ENCODE measurements at regions of chr4 and their contacts with region 1.

Region 1: DNA sequence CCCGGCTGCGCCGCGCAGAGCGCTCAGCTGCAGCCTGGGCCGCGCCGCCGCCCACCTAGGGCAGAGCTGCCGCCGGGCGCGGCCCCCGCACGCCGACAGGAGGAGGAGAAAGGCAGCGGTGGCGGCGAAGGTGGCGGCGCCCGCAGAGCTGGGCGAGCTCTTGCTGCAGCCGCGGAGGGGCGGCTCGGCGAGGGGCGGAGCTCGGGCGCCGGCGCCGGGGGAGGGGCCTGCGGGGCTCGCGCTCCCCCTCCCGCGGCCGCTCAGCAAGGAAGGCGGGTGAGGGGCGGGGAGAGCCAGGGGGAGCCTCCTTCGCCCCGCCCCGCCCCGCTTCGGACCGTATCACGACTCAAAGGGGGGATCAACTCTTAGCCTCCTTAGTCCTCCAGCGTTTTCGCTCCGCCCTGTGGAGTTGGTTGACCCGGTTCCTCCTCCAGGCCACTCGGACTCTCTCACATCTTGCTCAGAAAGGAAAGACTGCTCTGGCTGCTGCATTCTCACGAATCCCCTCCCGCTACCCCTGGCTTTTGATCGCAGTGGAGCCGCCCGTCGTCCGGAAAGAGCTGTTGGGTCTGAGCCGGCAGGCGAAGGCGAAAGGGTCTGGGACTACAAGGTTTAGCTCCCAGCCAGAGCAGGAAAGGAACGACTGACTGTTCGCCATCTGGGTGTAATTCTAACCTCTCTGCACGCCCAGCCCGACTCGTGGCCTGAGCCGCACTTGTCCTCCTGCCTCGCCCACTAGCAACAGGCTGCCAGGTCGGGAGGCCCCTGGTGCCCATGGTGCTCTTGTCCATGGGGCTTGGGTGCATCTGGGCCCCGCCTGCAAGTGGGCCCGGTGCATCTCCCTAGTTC is at the start of gene ATP8A1:
- DNase-seq: peak; percentile 93
- ATAC-seq: peak; percentile 91
- H3K4me3 Mint-ChIP-seq: peak within 1 kb of the TSS; percentile 97
- H3K27ac Mint-ChIP-seq: peak within 1 kb of the TSS; percentile 99
- H3K4me1 Mint-ChIP-seq: peaks cover 41% of the 10 kb centered on the region
- H3K27me3 Mint-ChIP-seq: no peaks in the 10 kb centered on the region
- CTCF ChIP-seq: no peak
- total RNA-seq, gene ATP8A1: 27.9 and 35.6 TPM in 2 replicates

Region 2: DNA sequence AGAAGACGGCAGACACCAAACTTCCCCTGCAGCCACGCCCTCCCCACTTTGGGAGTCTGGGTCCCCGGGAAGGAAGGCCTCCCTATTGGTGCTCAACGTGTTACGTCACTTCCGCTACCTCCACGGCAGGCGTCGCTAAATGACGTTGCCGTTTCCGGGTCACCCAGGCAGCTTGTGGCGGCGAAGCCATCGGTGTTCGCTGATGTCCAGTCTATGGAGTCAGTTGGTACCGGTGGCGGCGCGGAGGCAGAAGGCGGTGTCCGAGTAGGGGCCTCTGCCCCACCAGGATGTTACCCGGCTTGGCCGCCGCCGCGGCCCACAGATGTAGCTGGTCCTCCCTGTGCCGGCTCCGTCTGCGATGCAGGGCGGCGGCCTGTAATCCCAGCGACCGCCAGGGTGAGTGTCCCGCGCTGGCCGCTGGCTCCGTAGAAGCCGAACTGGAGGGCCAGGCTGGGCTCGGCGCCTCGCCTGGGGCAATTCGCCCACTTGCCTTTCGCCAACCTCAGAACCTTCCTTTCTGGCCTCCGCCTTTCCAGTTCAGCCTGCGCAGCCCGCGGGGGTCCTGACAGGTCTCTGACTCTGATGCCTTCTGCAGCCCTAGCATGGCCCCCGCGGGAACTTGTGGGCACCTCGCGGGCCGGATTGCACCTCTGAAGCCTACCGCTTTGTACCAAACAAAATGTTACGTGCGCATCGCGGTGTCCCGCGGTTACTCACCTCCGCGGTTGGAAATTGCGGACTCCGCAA is 666.6 kb before region 1 on chr4 and contains the start of gene SLC30A9:
- CTCF ChIA-PET with region 1: no interaction called
- POLR2A ChIA-PET with region 1: interaction called, 10 read pairs
- intact Hi-C with region 1: loop called (anchors 5 kb)
- DNase-seq: peak; percentile 82
- ATAC-seq: peak; percentile 95
- H3K4me3 Mint-ChIP-seq: peak within 1 kb of the TSS; percentile 98
- H3K27ac Mint-ChIP-seq: peak within 1 kb of the TSS; percentile 95
- H3K4me1 Mint-ChIP-seq: peaks cover 29% of the 10 kb centered on the region
- H3K27me3 Mint-ChIP-seq: no peaks in the 10 kb centered on the region
- CTCF ChIP-seq: no peak
- total RNA-seq, gene SLC30A9: 29.0 and 33.4 TPM in 2 replicates

Region 3: GRCh38 chr4:42568610-42569207 is 88.5 kb before region 1 on chr4:
- CTCF ChIA-PET with region 1: interaction called, 36 read pairs
- POLR2A ChIA-PET with region 1: interaction called, 10 read pairs
- intact Hi-C with region 1: loop called (anchors 1 kb)
- DNase-seq: no peak
- ATAC-seq: peak; percentile 95
- H3K4me3 Mint-ChIP-seq: no peak overlapping the region
- H3K27ac Mint-ChIP-seq: no peak overlapping the region
- H3K4me1 Mint-ChIP-seq: no peaks in the 10 kb centered on the region
- H3K27me3 Mint-ChIP-seq: no peaks in the 10 kb centered on the region
- CTCF ChIP-seq: no peak

Region 4: DNA sequence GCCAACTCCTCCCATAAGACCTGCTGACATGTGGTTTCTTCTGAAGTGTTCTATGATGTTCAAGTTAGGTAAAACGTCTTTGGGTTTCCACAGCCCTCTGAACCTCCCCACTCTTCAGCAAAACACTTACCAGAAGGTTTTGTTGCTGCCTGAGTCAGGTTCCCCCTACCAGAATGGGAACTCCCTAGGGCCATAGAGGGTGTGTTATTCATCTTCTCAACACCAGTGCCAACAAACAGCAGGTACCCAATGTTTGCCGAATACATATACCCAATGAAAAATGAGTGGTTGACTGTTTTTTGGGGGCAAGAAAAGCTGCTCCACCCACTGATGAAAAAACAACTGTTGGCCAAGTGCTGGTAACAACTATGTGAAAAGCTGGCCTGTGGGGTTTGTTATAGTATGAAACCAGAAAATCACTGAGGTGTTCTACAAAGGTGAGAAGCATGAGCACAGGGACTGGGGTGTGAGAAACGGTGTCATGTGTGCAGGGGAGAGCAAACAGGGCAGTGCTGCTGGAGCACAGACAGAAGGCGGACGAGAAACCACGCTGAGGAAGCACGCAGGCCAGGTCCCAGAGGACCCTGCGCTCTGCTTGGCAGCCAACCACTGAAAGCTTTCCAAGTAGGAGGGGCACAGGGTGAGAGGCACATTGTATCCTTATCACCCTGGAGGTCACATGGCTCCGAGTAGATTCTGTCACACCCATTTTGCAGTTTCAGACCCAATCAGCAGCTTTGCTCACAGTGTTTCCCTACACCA is 29.1 kb before region 1 on chr4:
- CTCF ChIA-PET with region 1: interaction called, 7 read pairs
- POLR2A ChIA-PET with region 1: interaction called, 72 read pairs
- intact Hi-C with region 1: loop called (anchors 1 kb)
- DNase-seq: peak; percentile 57
- ATAC-seq: peak; percentile 91
- H3K4me3 Mint-ChIP-seq: peak overlapping the region; percentile 74
- H3K27ac Mint-ChIP-seq: peak overlapping the region; percentile 95
- H3K4me1 Mint-ChIP-seq: peaks cover 90% of the 10 kb centered on the region
- H3K27me3 Mint-ChIP-seq: no peaks in the 10 kb centered on the region
- CTCF ChIP-seq: no peak

Region 5: DNA sequence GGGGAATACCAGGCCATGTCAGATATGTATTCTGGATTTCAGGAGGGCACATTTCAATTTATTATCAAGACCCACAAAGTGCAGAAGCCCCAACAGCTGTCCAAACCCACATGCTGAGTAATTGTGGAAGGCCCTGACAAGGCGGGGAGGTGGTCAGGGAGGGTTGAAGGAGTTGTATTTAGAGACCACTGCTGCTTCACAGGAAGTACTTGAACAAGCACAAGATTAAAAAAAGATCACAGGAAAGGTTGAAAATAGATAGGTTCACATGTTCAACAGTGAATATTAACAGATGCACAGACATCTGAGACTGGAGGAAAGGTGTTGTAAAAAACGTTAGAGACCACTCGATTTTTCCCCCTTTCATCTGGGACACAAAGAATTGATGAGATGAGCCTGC is 18.2 kb before region 1 on chr4:
- CTCF ChIA-PET with region 1: interaction called, 17 read pairs
- POLR2A ChIA-PET with region 1: interaction called, 95 read pairs
- intact Hi-C with region 1: loop called (anchors 2 kb)
- DNase-seq: no peak
- ATAC-seq: peak; percentile 3
- H3K4me3 Mint-ChIP-seq: peak overlapping the region; percentile 76
- H3K27ac Mint-ChIP-seq: peak overlapping the region; percentile 92
- H3K4me1 Mint-ChIP-seq: peaks cover 95% of the 10 kb centered on the region
- H3K27me3 Mint-ChIP-seq: no peaks in the 10 kb centered on the region
- CTCF ChIP-seq: no peak

Region 6: GRCh38 chr4:42673082-42673425 is 15.9 kb after region 1 on chr4:
- CTCF ChIA-PET with region 1: interaction called, 4 read pairs
- POLR2A ChIA-PET with region 1: interaction called, 17 read pairs
- intact Hi-C with region 1: no loop called
- DNase-seq: no peak
- ATAC-seq: peak; percentile 45
- H3K4me3 Mint-ChIP-seq: no peak overlapping the region
- H3K27ac Mint-ChIP-seq: no peak overlapping the region
- H3K4me1 Mint-ChIP-seq: peaks cover 15% of the 10 kb centered on the region
- H3K27me3 Mint-ChIP-seq: peaks cover 8% of the 10 kb centered on the region
- CTCF ChIP-seq: no peak

Measured in activated B cell treated with CpG ODN at 0.5 μM for 24 hours (primary cell).